BJ (cell line): ENCODE measurements at regions of chr6 and their contacts with region 1.

Region 1: GRCh38 chr6:145044641-145045246 is 690.6 kb downstream of the EPM2A start:
- DNase-seq: peak; percentile 44
- H3K4me3 ChIP-seq: no peak overlapping the region
- H3K27me3 ChIP-seq: no peaks in the 10 kb centered on the region
- CTCF ChIP-seq: no peak

Region 2: GRCh38 chr6:145031001-145031400 is 13.7 kb before region 1 on chr6:
- CTCF ChIA-PET with region 1: interaction called, 12 read pairs
- POLR2A ChIA-PET with region 1: no interaction called
- DNase-seq: no peak
- H3K4me3 ChIP-seq: no peak overlapping the region
- H3K27me3 ChIP-seq: no peaks in the 10 kb centered on the region
- CTCF ChIP-seq: no peak